Gastrocnemius medialis (tissue), 4 donors: ENCODE measurements at regions of chr1 and their contacts with region 1.

Region 1: GRCh38 chr1:28886731-28887418 is 27.5 kb upstream of the EPB41 start:
- DNase-seq: peak; percentile 78 to 86
- ATAC-seq: peak; percentile 78 to 82
- H3K4me3 ChIP-seq: peak overlapping the region; percentile 85 to 92 (median 88)
- H3K27ac ChIP-seq: peak overlapping the region; percentile 87 to 93 (median 92)
- H3K4me1 ChIP-seq: peaks cover 19 to 26% of the 10 kb centered on the region in 2 donors
- H3K27me3 ChIP-seq: no peaks in the 10 kb centered on the region
- CTCF ChIP-seq: no peak
- POLR2A ChIP-seq: peak; percentile 63 to 70

Region 2: GRCh38 chr1:28259307-28260167 is 627.3 kb before region 1 on chr1 and contains the start of gene SESN2:
- in situ Hi-C with region 1: no loop called
- intact Hi-C with region 1: loop called (anchors 10 kb)
- DNase-seq: peak; percentile 99 to 100
- ATAC-seq: peak; percentile 97
- H3K4me3 ChIP-seq: peak within 1 kb of the TSS; percentile 94 to 99 (median 96)
- H3K27ac ChIP-seq: peak within 1 kb of the TSS; percentile 92 to 98 (median 94)
- H3K4me1 ChIP-seq: peaks cover 29 to 33% of the 10 kb centered on the region in 2 donors
- H3K27me3 ChIP-seq: no peaks in the 10 kb centered on the region
- CTCF ChIP-seq: no peak
- POLR2A ChIP-seq: peak; percentile 99 to 100
- total RNA-seq, gene SESN2: 5.6 to 18.9 (median 12.4) TPM

Region 3: DNA sequence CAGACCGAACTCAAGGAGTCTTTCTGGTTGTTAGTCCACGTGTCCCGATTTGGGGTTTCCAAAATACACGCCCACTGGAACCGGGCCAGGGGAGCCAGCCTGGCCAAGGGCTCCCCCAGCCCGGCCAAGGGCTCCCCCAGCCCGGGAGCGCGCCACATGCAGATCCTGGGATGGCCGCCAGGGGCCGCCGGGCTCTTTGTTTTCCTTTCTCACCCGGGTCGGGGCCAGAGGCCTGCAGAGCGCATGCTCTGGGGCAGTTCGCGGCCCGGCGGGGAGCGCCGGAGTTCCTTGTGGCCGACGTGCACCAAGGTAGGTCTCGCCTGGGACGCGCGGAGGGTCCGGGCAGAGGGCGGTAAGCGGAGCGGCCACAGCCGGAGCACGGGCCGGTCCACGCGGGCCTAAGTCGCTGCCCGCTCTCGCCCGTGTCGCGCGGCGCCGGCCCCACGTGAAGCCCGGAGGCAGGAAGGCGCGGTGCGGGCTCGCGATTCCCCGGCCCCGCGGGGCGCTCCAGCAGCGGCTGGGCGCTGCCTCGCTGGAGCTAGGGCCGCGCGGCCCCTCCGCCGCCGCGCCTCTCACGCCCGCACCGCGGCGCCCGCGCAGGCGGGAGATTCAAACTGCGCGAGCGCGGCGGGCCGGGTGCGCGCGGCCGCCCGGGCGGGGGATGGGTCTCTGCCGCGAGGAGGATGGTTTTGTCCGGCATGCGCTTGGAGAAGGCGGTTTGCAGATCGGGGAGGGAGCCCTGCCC is 368.7 kb before region 1 on chr1:
- in situ Hi-C with region 1: loop called in 1 of 4 experiments (anchors 25 kb)
- intact Hi-C with region 1: no loop called
- DNase-seq: peak; percentile 79 to 85
- ATAC-seq: peak; percentile 90 to 91
- H3K4me3 ChIP-seq: peak overlapping the region; percentile 58 to 93 (median 67)
- H3K27ac ChIP-seq: peak overlapping the region; percentile 65 to 92 (median 82)
- H3K4me1 ChIP-seq: peaks cover 5 to 13% of the 10 kb centered on the region in 2 donors
- H3K27me3 ChIP-seq: no peaks in the 10 kb centered on the region
- CTCF ChIP-seq: peak; percentile 98 to 100 (median 99)
- POLR2A ChIP-seq: peak; percentile 45 to 63

Region 4: DNA sequence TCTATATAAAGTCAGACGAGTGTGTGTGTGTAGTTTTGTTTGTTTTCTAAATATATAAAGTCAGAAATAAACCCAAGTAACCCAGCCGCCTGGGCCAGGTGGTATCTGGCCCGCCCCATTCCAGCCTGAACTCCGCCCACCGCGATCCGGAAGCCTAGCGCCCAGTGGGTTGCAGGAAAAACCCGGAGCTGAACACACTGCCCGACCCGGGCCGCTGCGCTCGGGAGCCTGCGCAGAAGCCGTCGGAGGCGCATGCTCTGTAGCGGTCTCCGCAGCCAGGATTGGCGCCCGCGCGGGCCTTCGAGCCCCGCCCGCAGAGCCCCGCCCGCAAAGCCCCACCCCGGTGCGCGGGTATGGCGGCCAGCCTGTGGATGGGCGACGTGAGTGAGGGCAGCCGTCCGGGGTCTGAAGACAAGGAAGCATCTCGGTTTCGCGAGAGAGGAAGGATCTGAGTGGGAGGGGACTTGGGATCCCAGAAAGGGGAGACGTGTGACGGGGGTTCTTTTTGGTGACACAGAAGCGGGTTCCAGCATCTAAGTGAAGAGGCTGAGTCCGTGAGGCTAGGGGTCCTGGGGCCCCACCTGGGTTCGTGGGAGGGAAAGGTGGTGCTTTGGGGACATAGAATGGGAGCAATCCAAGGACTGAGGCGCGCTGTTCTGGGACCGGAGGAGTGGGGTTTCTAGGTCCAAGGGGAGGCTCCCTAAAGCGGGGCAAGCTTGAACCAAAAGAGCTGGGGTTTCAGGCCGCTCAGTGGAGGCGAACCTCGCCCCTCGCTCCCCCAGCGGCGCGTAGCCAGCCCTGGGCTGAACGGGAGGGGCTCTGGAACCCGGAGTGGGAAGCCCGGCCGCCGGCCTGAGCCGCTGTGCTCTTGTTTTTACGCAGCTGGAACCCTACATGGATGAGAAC is 333.9 kb before region 1 on chr1 and contains the start of gene TRNAU1AP:
- in situ Hi-C with region 1: no loop called
- intact Hi-C with region 1: no loop called
- DNase-seq: peak; percentile 95 to 96
- ATAC-seq: peak; percentile 96
- H3K4me3 ChIP-seq: peak within 1 kb of the TSS; percentile 76 to 81 (median 80)
- H3K27ac ChIP-seq: peak within 1 kb of the TSS; percentile 86 to 93 (median 90)
- H3K4me1 ChIP-seq: peaks cover 8 to 14% of the 10 kb centered on the region in 2 donors
- H3K27me3 ChIP-seq: no peaks in the 10 kb centered on the region
- CTCF ChIP-seq: no peak
- POLR2A ChIP-seq: peak; percentile 80 to 87
- total RNA-seq, gene TRNAU1AP: 5.3 to 19.7 (median 12.0) TPM

Region 5: DNA sequence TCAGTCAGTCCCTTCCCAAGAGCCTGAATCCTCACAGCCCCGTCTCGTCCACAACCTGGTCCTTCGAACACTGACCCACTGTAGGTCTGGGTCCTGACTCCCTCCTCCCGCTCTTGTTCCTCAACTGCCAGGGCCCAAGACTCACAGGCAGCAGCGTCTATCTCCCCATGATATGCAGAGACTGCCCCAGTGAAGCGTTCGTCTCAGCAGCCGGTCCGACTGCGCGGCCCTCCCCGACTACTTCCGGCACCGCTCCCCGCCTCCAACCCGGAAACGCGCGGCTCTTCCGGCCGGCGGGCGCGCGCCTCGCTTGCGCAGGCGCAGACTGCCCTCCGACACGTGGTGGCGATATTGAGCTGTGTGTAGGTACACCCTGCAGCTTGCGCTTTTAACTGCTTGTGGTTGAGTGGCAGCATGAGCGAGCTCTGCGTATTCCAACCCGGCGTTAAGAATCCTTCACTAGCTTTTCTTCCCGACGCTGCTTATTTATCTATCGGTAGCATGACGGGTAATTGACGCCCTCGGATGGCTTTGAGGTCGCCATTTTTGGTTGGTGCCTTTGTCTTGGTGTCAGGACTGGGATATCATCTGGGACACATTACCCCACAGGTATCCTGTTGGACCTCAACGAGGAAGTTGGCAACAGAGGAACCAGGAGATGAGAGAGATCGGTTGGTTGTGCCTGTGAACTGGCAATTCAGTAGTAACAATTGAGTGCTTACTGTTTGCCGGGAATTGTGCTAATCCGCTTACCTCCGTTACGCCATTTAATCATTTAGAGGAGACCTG is 243.8 kb before region 1 on chr1 and contains the start of gene TAF12:
- in situ Hi-C with region 1: loop called in 3 of 4 experiments (anchors 10 to 25 kb)
- intact Hi-C with region 1: loop called (anchors 5 kb)
- DNase-seq: peak; percentile 84 to 91
- ATAC-seq: peak; percentile 83 to 90
- H3K4me3 ChIP-seq: peak within 1 kb of the TSS; percentile 71 to 95 (median 81)
- H3K27ac ChIP-seq: peak within 1 kb of the TSS; percentile 85 to 96 (median 92)
- H3K4me1 ChIP-seq: peaks cover 26 to 50% of the 10 kb centered on the region in 2 donors
- H3K27me3 ChIP-seq: no peaks in the 10 kb centered on the region
- CTCF ChIP-seq: peak; percentile 10 to 55 (median 50)
- POLR2A ChIP-seq: peak; percentile 92 to 94
- total RNA-seq, gene TAF12: 33.5 to 81.6 (median 65.0) TPM

Region 6: GRCh38 chr1:28860332-28861073 is 26.4 kb before region 1 on chr1:
- in situ Hi-C with region 1: no loop called
- intact Hi-C with region 1: no loop called
- DNase-seq: no peak
- ATAC-seq: no peak
- H3K4me3 ChIP-seq: no peak overlapping the region
- H3K27ac ChIP-seq: no peak overlapping the region
- H3K4me1 ChIP-seq: no peaks in the 10 kb centered on the region
- H3K27me3 ChIP-seq: no peaks in the 10 kb centered on the region
- CTCF ChIP-seq: no peak
- POLR2A ChIP-seq: no peak

Region 7: DNA sequence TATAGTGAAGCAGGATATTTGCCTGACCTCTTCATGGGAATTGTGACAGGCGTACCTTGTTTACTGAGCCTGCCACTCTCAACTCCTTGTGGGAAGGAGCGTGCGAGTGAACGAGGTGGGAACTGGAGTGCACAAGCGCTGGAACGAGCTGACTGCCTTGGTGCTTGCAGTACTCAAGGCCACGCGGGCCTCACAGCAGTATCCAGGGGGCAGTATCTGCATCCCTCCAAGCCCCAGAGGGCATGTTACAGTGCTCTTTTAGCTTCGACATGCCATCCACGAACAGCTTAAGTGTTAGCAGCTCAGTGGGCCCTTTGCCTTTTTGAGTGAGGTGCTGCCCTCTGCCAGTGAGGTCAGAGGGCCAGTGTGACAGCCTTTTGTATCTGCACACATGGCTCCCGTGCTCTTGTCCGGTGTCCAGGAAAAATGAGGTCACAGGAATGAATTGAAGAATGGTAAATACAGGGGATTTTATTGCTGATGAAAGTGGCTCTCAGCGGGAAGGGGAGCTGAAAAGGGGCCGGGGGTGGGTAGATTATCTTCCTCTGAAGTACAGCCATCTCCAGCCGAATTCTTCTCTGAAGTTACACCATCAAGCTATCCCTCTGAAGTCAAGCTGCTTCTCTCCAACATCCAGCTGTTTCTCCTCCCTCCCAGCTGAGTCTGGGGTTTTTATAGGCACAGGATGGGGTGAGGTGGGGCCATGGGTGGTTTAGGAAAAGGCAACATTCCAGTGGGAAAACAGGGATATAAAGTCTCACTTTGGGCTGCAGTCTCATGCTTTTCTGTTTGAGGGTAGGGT is 96.8 kb after region 1 on chr1:
- in situ Hi-C with region 1: loop called in 1 of 4 experiments (anchors 10 kb)
- intact Hi-C with region 1: loop called (anchors 1 kb)
- DNase-seq: peak; percentile 38 to 62
- ATAC-seq: peak; percentile 84 to 85
- H3K4me3 ChIP-seq: no peak overlapping the region
- H3K27ac ChIP-seq: peak overlapping the region; percentile 45 to 74 (median 63)
- H3K4me1 ChIP-seq: peaks cover 25 to 32% of the 10 kb centered on the region in 2 donors
- H3K27me3 ChIP-seq: no peaks in the 10 kb centered on the region
- CTCF ChIP-seq: peak in 2 of 5 experiments; percentile 19 to 28
- POLR2A ChIP-seq: no peak

Region 8: DNA sequence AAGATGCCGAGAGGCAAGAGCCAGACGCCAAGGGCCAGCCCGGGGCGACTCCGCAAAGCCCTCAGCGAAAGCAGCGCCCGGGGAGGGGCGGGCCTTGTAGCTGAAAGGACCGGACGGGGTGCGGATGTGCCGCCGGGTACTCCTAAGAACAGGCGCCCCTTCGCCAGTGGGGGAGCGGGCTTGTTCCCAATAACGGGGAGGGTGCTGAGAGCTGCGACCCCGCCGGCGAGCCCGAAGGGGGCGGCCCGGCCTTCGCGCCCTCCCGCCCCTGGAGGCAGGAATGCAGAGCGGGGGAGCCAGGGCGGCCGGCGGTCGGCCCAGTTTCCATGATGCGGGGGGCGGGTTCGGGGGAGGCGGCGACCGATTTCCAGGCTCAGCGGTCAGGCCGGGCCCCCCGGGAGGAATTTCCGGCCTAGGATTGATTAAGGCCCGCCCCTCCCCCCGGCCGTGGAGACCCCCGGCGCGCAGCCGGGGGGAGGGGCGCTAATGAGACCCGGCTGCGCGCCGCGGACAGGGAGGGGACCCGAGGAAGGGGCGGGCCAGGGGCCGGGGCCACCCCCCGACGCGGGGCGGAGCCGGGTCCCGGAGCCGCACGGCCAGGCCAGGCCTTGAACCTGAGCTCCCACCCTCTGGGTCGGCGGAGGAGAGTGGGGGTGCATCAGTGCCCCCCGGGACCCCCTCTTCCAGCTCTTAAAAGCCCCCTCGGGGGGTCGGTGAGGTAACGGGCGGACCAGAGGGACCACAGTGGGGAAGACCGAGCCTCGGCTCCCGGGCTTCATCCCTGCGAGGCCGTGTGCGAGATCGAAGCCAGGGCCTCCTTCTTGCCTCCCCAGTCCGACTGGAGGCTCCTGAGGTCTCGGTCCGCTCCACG is 237.7 kb after region 1 on chr1:
- in situ Hi-C with region 1: no loop called
- intact Hi-C with region 1: loop called (anchors 5 kb)
- DNase-seq: peak; percentile 22 to 33
- ATAC-seq: peak; percentile 56 to 62
- H3K4me3 ChIP-seq: peak overlapping the region; percentile 55 to 80 (median 62)
- H3K27ac ChIP-seq: peak overlapping the region; percentile 71 to 82 (median 78)
- H3K4me1 ChIP-seq: peaks cover 0 to 22% of the 10 kb centered on the region in 2 donors
- H3K27me3 ChIP-seq: peaks cover 30 to 46% (median 33%) of the 10 kb centered on the region in 3 donors
- CTCF ChIP-seq: peak; percentile 59 to 85 (median 77)
- POLR2A ChIP-seq: peak; percentile 44 to 55

Region 9: GRCh38 chr1:29202584-29203340 is 315.9 kb after region 1 on chr1:
- in situ Hi-C with region 1: loop called (anchors 5 to 10 kb)
- intact Hi-C with region 1: loop called (anchors 1 kb)
- DNase-seq: peak; percentile 88 to 92
- ATAC-seq: peak; percentile 98 to 100
- H3K4me3 ChIP-seq: no peak overlapping the region
- H3K27ac ChIP-seq: peak overlapping the region; percentile 35 to 70 (median 69)
- H3K4me1 ChIP-seq: peaks cover 6 to 7% of the 10 kb centered on the region in 2 donors
- H3K27me3 ChIP-seq: no peaks in the 10 kb centered on the region
- CTCF ChIP-seq: peak; percentile 85 to 97 (median 94)
- POLR2A ChIP-seq: no peak